Heart left ventricle (tissue), 16 donors: ENCODE measurements at regions of chr9 and their contacts with region 1.

Region 1: DNA sequence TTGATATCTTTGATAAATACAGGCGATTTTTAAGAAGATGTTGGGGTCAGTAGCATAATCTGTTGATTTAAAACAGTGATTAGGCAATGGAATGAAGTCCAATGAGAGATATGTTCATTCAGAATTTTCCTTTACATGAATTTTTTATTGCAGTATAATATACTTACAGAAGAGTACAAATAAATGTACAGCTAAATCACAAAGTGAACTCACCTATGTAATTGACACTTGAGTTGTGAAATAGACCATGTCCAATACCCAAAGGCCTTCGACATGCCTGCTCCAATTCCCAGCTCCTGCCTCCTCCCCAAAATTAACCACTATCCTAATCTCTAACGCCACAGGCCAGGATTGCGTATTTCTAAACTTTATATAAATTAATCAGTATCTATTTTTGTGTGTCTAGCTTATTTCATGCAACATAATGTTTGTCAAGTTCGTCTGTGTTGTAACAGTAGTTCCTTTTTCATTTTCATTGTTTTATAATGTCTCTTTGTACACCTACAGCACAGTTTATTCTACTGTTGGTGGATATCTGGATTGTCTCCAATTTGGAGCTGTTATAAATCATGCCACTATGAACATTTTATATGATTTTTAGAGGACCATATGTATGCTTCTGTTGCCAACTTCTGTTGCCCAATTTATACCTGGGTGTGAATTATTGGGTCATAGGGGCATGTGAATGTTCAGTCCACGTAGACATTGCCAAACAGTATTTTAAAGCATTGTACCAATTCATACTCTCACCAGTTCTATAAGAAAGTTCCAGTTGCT is 208.3 kb downstream of the TLE1 start:
- DNase-seq: no peak
- ATAC-seq: no peak
- H3K4me3 ChIP-seq: no peak overlapping the region
- H3K27ac ChIP-seq: no peak overlapping the region
- H3K4me1 ChIP-seq: peaks cover 0 to 4% (median 0%) of the 10 kb centered on the region in 12 donors
- H3K27me3 ChIP-seq: no peaks in the 10 kb centered on the region
- CTCF ChIP-seq: no peak
- POLR2A ChIP-seq: no peak

Region 2: DNA sequence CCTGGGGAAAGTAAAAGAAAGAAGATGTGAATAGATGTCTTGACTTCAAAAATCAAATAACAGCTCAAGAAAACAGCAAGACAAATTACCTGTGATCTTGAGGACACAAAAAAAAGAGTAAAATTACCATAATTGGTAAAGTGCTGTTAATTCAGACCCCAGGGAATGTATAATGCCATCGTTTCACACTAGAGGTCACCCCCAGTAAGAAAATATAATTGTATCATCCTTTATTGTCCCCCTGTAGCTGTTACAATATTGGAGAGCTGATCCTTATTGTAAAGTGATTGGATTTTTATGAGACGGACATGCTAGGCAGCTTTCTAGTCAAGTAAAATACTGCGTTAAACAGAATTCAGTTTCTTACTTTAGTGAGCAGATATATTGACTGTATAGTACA is 168.7 kb before region 1 on chr9:
- intact Hi-C with region 1: no loop called
- DNase-seq: no peak
- ATAC-seq: no peak
- H3K4me3 ChIP-seq: no peak overlapping the region
- H3K27ac ChIP-seq: no peak overlapping the region
- H3K4me1 ChIP-seq: no peaks in the 10 kb centered on the region
- H3K27me3 ChIP-seq: no peaks in the 10 kb centered on the region
- CTCF ChIP-seq: peak in 3 of 12 donors; percentile 5 to 15 (median 11)
- POLR2A ChIP-seq: no peak

Region 3: DNA sequence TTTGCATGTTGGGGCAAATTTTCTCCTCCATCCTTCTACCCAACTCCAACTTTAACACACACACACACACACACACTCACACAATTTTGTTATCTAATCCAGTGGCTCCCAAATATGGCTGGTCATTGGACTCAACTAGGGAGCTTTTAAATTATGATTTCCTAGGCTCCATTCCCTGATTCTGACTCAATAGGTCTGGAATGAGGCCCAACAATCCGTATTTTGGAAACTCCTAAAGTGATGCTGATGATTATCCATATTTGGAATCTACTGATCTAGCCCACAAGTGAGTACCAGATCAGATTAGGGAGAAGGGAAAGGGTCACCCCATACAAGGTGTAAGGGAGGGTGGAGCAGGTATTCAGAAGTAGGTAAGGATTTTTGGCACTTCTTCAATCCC is 101.4 kb before region 1 on chr9:
- intact Hi-C with region 1: no loop called
- DNase-seq: no peak
- ATAC-seq: no peak
- H3K4me3 ChIP-seq: no peak overlapping the region
- H3K27ac ChIP-seq: no peak overlapping the region
- H3K4me1 ChIP-seq: peaks cover 0 to 21% (median 13%) of the 10 kb centered on the region in 12 donors
- H3K27me3 ChIP-seq: no peaks in the 10 kb centered on the region
- CTCF ChIP-seq: no peak
- POLR2A ChIP-seq: no peak

Region 4: DNA sequence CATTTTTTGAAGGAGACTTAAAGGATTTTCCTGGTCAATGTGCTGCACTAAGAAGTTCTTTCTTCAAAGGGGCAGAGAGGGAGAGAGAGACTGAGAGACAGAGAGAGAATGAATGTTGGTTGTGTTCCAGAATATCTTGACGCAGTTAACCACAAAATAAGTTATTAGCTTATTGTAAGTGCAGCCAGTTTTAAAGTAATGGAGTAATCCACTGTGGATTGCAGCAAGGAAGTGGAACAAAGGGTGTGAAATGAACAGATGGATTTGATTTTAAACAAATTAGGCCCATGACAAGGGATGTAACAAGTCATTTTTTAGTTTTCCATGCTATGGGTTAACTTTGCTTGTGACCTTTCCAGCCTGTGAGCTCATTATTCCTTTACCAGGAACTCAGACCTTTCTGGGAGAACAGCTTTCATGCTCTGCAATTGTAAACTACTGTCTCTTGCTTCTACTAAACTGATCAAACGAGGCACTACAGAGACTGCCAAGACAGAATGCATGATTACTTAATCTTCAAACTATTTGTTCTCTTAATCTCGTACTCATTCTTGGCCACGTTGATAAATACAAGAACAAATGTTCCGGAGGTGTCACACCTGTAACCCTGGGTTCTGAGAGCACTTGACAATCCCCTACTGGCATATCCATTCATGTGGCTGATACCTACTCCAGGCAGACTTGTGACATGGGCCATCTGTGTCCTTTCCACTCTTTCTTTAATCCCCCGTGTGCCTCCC is 77.2 kb after region 1 on chr9:
- intact Hi-C with region 1: no loop called
- DNase-seq: no peak
- ATAC-seq: peak; percentile 52 to 80 (median 78)
- H3K4me3 ChIP-seq: no peak overlapping the region
- H3K27ac ChIP-seq: peak overlapping the region in 8 of 12 donors; percentile 6 to 63 (median 48)
- H3K4me1 ChIP-seq: peaks cover 0 to 21% (median 9%) of the 10 kb centered on the region in 12 donors
- H3K27me3 ChIP-seq: no peaks in the 10 kb centered on the region
- CTCF ChIP-seq: no peak
- POLR2A ChIP-seq: no peak

Region 5: DNA sequence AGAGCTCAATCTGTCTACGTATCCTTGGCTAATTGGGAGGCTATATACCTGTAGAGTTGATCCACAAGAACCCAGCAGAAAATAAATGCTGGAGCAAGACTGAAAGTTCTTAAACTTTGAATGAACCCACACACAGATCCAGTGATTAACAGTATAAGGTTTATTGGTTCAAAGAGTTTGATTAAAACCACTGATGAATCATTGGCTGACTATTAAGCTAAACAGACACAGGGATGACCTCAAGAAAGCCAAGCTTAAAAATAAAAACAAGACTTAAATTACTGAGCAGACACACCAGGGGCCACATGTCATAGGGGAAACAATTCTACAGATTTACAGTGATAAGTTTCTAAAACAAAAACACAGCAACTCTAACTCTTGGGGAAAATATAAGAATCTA is 671.2 kb after region 1 on chr9:
- intact Hi-C with region 1: loop called in 1 of 10 experiments (anchors 5 kb)
- DNase-seq: no peak
- ATAC-seq: no peak
- H3K4me3 ChIP-seq: no peak overlapping the region
- H3K27ac ChIP-seq: no peak overlapping the region
- H3K4me1 ChIP-seq: peaks cover 0 to 4% (median 0%) of the 10 kb centered on the region in 12 donors
- H3K27me3 ChIP-seq: no peaks in the 10 kb centered on the region
- CTCF ChIP-seq: no peak
- POLR2A ChIP-seq: no peak